Activated naive CD4-positive, alpha-beta T cell treated with anti-CD3 and anti-CD28 coated beads for 36 hours (primary cell): ENCODE measurements at regions of chr13 and their contacts with region 1.

Region 1: DNA sequence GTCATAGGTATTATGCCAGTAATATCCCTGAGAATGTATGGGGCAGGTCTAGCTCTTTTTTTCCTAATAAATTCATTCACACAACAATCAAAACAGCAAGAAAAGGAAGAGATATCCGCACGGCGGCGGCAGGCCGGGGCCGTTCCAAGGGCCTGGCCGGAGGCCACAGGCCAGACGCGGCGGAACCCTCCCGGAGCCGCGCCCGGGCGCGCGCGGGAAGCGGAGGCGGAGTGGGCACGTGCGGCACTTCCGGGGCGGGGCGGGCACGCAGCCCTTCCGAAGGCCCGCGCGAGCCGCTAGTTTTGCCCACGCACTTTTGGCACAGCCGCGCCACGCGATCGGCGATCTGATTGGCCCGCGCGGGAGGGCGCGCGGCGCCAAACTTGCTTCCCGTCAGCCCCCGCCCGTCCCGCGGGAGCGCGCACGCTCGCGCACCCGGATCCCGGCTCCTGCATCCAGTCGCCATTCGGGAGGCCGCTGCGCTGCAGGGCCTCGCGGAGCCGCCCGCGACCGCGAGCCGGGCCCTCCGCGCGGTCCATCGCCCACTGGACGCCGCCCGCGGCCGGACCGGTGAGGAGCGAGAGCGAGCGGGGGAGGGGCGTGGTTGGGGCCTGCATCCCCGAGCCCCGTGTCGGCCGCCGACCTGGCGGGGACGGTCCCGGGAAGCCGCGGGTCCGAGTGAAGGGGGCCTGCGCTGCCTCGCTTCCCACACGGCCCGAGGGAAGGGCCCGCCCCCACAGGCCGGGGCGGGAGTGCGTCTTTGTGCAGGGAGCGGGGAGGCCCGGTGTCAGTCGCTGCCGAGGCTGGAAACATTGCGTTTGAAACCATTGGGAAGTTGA is at the start of gene CHAMP1:
- DNase-seq: peak; percentile 95
- H3K4me3 Mint-ChIP-seq: peak within 1 kb of the TSS; percentile 84
- H3K27ac Mint-ChIP-seq: peak within 1 kb of the TSS; percentile 100
- H3K4me1 Mint-ChIP-seq: peaks cover 49% of the 10 kb centered on the region
- H3K27me3 Mint-ChIP-seq: no peaks in the 10 kb centered on the region
- total RNA-seq, gene CHAMP1: 50.6 to 52.6 TPM

Region 2: GRCh38 chr13:114234645-114235421 is 79.5 kb before region 1 on chr13 and contains the start of gene CDC16:
- CTCF ChIA-PET with region 1: no interaction called
- intact Hi-C with region 1: loop called (anchors 1 kb)
- DNase-seq: peak; percentile 92
- H3K4me3 Mint-ChIP-seq: peak within 1 kb of the TSS; percentile 81
- H3K27ac Mint-ChIP-seq: peak within 1 kb of the TSS; percentile 83
- H3K4me1 Mint-ChIP-seq: peaks cover 33% of the 10 kb centered on the region
- H3K27me3 Mint-ChIP-seq: no peaks in the 10 kb centered on the region
- total RNA-seq, gene CDC16: 67.2 to 69.5 TPM

Region 3: GRCh38 chr13:114339857-114340534 is 25.7 kb after region 1 on chr13:
- CTCF ChIA-PET with region 1: interaction called, 3 read pairs
- intact Hi-C with region 1: loop called (anchors 1 kb)
- DNase-seq: peak; percentile 66
- H3K4me3 Mint-ChIP-seq: no peak overlapping the region
- H3K27ac Mint-ChIP-seq: peak overlapping the region; percentile 8
- H3K4me1 Mint-ChIP-seq: peaks cover 4% of the 10 kb centered on the region
- H3K27me3 Mint-ChIP-seq: peaks cover 6% of the 10 kb centered on the region